ENCODE measurements at regions of chr4 and their contacts with region 1.

Region 1: DNA sequence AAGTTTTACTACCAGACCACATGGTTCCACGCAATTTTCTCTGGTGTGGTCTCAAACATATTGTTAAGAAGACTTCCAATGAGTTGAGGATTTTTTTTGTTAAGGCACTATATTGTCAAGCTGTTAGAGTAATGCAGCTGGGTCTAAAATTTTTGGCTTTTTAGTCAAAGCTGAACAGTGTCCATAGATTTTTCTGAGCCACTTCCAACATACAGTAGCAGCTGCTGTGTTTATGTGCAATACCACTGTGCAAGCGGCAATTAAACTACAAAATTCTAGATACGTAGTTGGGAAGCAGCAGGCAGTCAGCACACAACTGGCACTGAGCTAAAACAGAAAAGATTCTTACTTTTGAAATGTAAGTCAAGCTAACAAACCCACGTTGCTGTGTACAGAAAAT is 1551.1 kb upstream of the AGA start:
- DNase-seq: no peak
- H3K4me3 ChIP-seq: no peak overlapping the region
- H3K27ac ChIP-seq: no peak overlapping the region
- H3K4me1 ChIP-seq: no peaks in the 10 kb centered on the region
- H3K27me3 ChIP-seq: no peaks in the 10 kb centered on the region
- CTCF ChIP-seq: no peak
- POLR2A ChIP-seq: no peak

Region 2: GRCh38 chr4:179029683-179030082 is 36.4 kb after region 1 on chr4:
- intact Hi-C with region 1: loop called (anchors 2 kb)
- DNase-seq: no peak
- H3K4me3 ChIP-seq: no peak overlapping the region
- H3K27ac ChIP-seq: no peak overlapping the region
- H3K4me1 ChIP-seq: no peaks in the 10 kb centered on the region
- H3K27me3 ChIP-seq: no peaks in the 10 kb centered on the region
- CTCF ChIP-seq: no peak
- POLR2A ChIP-seq: no peak

Region 3: GRCh38 chr4:179719766-179720470 is 726.6 kb after region 1 on chr4:
- intact Hi-C with region 1: loop called (anchors 5 kb)
- DNase-seq: no peak
- H3K4me3 ChIP-seq: no peak overlapping the region
- H3K27ac ChIP-seq: no peak overlapping the region
- H3K4me1 ChIP-seq: no peaks in the 10 kb centered on the region
- H3K27me3 ChIP-seq: no peaks in the 10 kb centered on the region
- CTCF ChIP-seq: no peak
- POLR2A ChIP-seq: no peak